Activated naive CD4-positive, alpha-beta T cell treated with anti-CD3 and anti-CD28 coated beads for 36 hours (primary cell): ENCODE measurements at regions of chr12 and their contacts with region 1.

Region 1: DNA sequence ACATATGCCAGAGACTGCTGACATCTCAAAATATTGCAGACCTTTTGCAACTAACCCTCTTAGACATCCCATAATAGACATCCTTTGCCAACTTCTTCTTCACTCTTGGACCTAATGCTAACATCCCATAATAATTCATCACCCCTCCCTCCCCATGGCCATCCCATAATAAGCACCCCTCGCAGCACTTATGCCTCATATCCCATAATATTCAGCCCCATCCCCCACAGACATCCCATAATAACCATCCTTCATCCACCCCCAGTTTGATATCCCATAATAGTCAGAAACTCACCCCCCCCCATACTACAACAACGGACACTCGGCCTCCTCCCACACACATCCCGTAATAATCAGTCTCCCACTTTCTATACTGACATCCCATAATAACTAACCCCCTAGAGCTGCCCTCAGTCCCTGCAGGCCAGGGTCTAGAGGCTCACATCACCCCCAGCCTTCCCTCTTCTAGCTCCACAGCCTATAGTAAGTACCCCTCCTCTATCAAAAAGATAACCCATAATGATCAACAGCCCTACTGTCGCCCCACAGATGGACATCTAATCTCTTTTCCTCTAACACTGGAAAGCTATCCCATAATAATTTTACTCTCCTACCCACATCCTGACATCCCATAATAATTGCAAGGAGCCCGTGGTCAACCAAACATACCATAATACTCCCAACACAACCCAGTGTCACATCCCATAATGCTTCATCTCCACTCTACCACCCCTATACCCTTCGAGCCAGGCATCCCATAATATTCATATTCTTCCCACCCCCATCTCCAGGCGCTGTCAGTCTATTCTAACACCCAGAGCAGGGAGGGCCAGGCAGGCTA is 792 bp upstream of the CHD4 start:
- DNase-seq: peak; percentile 79
- H3K4me3 Mint-ChIP-seq: no peak overlapping the region
- H3K27ac Mint-ChIP-seq: no peak overlapping the region
- H3K4me1 Mint-ChIP-seq: peaks cover 55% of the 10 kb centered on the region
- H3K27me3 Mint-ChIP-seq: no peaks in the 10 kb centered on the region

Region 2: GRCh38 chr12:6335451-6336078 is 272.4 kb before region 1 on chr12:
- CTCF ChIA-PET with region 1: no interaction called
- intact Hi-C with region 1: loop called (anchors 5 kb)
- DNase-seq: peak; percentile 94
- H3K4me3 Mint-ChIP-seq: no peak overlapping the region
- H3K27ac Mint-ChIP-seq: no peak overlapping the region
- H3K4me1 Mint-ChIP-seq: peaks cover 46% of the 10 kb centered on the region
- H3K27me3 Mint-ChIP-seq: no peaks in the 10 kb centered on the region

Region 3: GRCh38 chr12:6493497-6494257 is 114.3 kb before region 1 on chr12 and contains the start of gene NCAPD2:
- CTCF ChIA-PET with region 1: interaction called, 3 read pairs
- intact Hi-C with region 1: loop called (anchors 1 kb)
- DNase-seq: peak; percentile 98
- H3K4me3 Mint-ChIP-seq: peak within 1 kb of the TSS; percentile 98
- H3K27ac Mint-ChIP-seq: peak within 1 kb of the TSS; percentile 99
- H3K4me1 Mint-ChIP-seq: peaks cover 33% of the 10 kb centered on the region
- H3K27me3 Mint-ChIP-seq: no peaks in the 10 kb centered on the region
- total RNA-seq, gene NCAPD2: 252 to 261 TPM

Region 4: GRCh38 chr12:6582196-6582595 is 25.8 kb before region 1 on chr12:
- CTCF ChIA-PET with region 1: no interaction called
- intact Hi-C with region 1: no loop called
- DNase-seq: peak; percentile 24
- H3K4me3 Mint-ChIP-seq: no peak overlapping the region
- H3K27ac Mint-ChIP-seq: no peak overlapping the region
- H3K4me1 Mint-ChIP-seq: peaks cover 4% of the 10 kb centered on the region
- H3K27me3 Mint-ChIP-seq: no peaks in the 10 kb centered on the region

Region 5: GRCh38 chr12:6632026-6632983 is 24.3 kb after region 1 on chr12:
- CTCF ChIA-PET with region 1: interaction called, 5 read pairs
- intact Hi-C with region 1: loop called (anchors 1 kb)
- DNase-seq: peak; percentile 77
- H3K4me3 Mint-ChIP-seq: peak overlapping the region; percentile 74
- H3K27ac Mint-ChIP-seq: peak overlapping the region; percentile 97
- H3K4me1 Mint-ChIP-seq: peaks cover 62% of the 10 kb centered on the region
- H3K27me3 Mint-ChIP-seq: no peaks in the 10 kb centered on the region

Region 6: GRCh38 chr12:6778574-6779550 is 170.9 kb after region 1 on chr12:
- CTCF ChIA-PET with region 1: interaction called, 7 read pairs
- intact Hi-C with region 1: loop called (anchors 1 kb)
- DNase-seq: peak; percentile 96
- H3K4me3 Mint-ChIP-seq: peak overlapping the region; percentile 82
- H3K27ac Mint-ChIP-seq: peak overlapping the region; percentile 63
- H3K4me1 Mint-ChIP-seq: peaks cover 89% of the 10 kb centered on the region
- H3K27me3 Mint-ChIP-seq: no peaks in the 10 kb centered on the region